Cardiac septum (tissue), 1 donor: ENCODE measurements at regions of chr5 and their contacts with region 1.

Region 1: DNA sequence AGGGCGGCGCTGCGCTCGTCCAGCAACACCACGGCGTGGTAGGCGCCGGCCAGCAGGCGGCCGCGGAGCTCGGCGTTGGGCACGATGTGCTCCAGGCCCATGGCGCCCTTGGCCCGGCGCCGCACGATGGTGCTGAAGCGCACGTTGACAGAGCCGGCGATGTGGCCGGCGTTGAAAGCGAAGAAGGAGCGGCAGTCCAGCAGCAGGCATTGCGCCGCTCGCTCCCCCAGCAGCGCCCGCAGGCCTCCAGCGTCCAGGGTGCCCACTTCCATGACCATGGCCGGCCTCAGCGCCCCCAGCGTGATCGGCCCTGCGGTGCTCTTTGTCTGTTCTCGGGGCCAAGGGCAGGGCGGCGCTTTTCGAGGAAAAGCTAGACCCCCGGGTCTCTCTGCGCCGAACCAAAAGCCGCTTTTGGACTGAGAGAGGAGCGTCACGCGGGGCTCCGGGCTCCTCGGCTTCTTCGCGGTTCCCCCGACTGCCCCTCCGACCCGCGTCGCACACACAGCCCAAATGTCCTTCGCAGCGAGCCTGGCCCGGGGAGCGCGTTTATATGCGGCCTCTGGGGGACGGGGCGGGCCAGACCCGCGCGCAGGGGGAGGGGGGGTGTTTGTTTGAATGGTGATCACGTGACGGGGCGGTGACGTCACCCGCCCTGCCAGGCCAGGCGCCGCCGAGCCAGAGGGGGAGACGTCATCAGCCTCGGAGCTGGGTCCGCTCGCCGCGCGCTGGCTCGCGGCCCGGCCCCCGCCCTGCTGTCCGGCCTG is at the start of gene DUSP1:
- DNase-seq: peak; percentile 100
- total RNA-seq, gene DUSP1: 49.9 TPM

Region 2: DNA sequence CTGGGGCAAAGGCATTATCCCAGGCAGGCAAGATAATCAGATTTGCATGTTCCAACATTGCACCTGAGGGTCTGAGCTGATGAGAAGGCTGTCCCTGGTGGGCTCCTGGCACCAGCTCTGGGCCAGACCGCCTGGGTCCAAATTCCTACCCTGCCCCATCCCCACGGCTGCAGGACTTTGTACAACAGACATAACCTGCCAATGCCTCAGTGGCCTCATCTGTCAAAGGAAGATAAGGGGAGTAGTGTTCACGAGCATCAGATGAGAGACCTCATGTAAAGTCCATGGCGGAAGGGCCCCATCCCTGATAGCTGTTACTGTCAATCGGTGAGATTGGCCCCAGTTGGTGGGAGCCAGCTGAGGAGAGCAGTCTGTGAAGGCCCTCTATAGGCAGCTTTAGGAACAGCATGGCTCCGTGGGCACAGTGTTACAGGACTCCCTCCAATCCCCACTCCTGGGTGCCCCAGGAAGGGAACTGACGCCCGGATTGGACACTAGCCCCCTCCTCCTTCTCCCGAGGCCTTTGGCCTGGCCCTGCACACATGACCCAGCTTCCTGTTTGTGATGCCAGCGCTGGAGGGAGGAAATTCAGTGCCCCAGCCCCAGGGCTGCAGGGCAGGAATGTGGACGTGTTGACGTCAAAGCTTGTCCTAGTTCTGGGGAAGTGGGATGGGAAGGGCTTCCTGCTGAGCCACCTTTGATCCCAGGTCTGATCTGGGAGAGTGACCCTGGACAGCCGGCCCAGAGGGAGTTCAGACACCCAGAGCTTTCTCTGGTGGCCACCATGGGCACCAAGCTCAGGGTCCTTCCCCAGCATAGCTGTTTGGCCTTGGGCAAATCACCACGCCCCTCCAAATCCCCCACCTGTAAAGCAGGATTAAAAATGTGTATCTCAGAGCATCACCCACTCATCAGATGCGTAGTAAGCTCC is 56.1 kb before region 1 on chr5:
- intact Hi-C with region 1: loop called (anchors 1 kb)
- DNase-seq: peak; percentile 91

Region 3: DNA sequence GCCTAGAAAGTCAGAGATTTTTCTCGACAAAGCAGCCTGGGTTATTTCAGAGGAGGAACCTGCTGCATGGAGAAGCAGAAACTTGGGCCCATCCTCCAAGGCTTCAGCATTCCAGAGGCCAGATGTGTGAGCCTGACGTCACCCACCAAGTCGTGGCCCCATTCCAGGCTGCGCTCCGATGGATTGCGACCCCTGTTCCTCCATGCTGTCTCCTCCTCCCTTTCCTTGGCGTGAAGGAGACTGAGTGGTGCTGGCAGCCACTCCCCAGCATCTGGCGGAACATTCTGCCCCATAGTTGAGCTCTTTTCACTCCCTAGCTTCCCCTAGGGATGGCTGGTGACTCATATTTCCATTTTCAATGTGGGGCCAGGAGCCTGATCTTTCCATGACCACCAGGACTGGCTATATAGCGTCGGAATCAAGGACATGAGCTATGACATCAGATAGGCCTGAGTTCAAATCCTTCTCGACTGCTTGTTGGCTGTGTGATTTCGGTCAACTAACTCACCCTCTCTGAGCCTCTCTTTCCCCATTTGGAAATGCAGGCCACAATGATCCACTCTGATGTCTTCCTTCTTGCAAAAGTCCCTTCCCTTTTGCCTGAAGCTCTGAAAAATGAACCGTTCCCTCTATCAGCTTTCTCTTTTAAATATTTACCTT is 24.6 kb after region 1 on chr5:
- intact Hi-C with region 1: loop called (anchors 1 kb)
- DNase-seq: peak; percentile 92

Region 4: DNA sequence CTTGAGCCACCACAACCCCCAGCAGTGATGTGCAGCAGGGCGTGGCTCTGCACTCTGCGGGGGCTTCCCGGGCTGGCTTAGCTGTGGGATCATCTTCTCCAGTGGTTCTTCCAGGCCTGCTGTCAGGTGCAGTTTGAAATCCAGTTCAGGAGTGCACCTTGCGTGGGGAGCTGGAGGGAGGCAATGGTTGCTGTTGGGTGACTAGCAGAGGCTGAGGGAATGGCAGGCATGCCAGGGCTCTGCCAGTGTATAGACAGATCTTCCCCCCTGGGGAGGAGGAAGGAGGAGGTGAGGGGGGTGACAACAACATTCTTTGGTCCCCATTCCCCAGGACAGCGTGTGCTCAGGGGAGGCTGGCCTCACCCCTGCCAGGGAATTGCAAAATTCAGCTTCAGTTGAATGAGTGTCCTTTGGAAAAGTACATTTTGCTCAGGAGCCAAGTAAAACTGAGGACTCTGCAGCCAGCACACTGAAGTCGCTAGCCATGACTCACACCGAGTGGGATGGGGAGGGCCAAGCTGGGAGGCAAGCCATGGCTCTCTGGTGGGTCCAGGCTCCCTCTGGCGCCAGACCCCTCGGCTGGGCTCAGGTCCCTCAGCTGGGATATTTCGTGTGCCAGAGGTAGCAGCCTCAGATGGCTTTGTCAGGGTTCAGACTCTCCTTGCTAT is 98.2 kb after region 1 on chr5:
- intact Hi-C with region 1: loop called (anchors 2 kb)
- DNase-seq: no peak

Region 5: DNA sequence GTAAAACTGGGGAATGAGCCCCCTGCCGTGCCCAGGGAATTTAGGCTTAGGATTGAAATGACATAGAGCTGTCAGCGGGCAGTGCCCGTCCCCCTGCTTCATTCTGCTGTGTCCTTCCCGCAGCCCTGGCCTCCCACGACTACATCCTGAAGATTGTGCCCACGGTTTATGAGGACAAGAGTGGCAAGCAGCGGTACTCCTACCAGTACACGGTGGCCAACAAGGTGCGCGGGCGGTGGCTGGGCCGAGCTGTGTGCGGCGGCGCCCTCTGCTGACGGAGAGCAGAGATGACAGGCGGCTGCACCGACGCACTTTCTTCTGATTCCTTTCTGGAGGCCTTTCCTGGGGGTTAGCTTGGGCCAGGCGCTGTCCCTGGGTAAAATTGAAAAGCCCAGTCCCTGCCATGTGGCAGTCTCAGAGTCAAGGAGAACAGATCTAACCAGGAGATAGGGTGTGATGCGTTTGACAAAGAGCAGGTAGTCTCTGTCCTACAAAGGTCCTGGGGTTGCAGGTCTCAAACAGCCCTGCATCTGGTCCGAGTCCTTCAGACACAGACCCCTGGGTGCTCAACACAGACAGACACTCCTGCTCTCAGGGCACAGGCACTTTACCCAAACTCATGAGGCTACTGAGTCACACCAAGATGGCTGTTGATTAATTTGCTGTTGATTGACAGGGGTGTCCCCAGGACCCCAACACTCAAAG is 161.6 kb after region 1 on chr5:
- intact Hi-C with region 1: loop called (anchors 2 kb)
- DNase-seq: peak; percentile 91

Region 6: GRCh38 chr5:172984243-172984953 is 213.5 kb after region 1 on chr5:
- intact Hi-C with region 1: no loop called
- DNase-seq: peak; percentile 79